ENCODE measurements at regions of chr10 and their contacts with region 1.

Region 1: DNA sequence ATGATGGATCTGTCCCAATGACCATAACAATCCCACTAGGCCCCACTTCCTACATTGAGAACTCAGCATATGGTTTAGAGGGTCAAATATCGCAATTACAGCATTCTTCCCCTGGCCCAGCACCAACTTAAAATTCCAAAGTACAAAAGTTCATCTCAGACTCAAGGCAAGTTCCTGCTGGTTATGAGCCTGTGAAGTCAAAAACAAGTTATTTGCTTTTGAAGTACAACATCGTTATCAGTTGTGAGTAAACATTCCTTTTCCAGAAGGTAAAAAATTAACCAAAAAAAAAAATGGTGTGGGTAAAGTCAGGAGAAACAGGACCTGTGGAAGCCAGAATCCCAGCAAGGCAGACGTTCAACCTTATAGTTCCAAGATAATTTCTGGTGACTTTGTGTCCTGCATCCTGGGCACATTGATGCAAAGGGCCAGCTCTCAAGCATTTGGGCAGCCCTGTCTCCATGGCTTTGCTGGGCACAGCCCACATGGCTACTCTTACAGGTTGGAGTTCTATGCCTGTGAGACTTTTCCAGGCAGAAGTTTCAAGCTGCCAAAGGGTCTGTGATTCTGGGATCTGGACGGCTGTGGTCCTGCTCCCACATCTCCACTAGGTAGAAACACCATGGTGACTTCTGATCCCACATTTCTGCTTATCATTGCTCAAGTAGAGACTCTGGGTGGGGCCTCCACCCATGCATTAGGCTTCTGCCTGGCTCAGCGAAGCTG is 37.5 kb downstream of the AKR1C8 start:
- DNase-seq: peak; percentile 47
- H3K4me3 Mint-ChIP-seq: peak overlapping the region; percentile 44
- H3K27ac Mint-ChIP-seq: peak overlapping the region; percentile 85
- H3K4me1 Mint-ChIP-seq: peaks cover 39% of the 10 kb centered on the region
- H3K27me3 Mint-ChIP-seq: no peaks in the 10 kb centered on the region
- CTCF ChIP-seq: no peak

Region 2: DNA sequence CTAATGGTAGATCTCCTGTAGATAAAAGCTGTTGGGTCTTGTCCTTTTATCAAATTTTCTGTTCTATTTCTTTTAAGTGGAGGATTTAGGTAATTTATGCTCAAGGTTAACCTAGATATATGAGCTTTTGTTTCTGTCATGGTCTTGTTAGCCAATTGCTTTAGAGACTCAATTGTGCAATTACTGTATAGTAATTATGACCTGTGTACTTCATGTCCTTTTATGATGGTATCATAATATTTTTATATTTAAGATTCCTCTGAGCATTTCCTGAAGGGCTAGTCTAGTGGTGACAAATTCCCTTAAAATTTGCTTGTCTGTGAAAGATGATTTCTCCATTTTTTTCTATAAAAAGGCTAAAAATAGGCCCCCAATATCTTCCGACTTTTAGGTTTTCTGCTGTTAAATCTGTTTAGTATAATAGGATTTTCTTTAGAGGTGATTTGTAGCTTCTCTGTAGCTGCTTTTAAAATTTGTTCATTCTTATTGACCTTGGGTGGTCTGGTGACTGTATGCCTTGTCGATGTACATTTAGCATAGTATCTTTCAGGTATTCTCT is 58.6 kb before region 1 on chr10:
- CTCF ChIA-PET with region 1: no interaction called
- intact Hi-C with region 1: no loop called
- DNase-seq: no peak
- H3K4me3 Mint-ChIP-seq: no peak overlapping the region
- H3K27ac Mint-ChIP-seq: no peak overlapping the region
- H3K4me1 Mint-ChIP-seq: peaks cover 37% of the 10 kb centered on the region
- H3K27me3 Mint-ChIP-seq: no peaks in the 10 kb centered on the region
- CTCF ChIP-seq: no peak

Region 3: GRCh38 chr10:5199398-5199797 is 52.0 kb after region 1 on chr10:
- CTCF ChIA-PET with region 1: no interaction called
- intact Hi-C with region 1: loop called (anchors 10 kb)
- DNase-seq: no peak
- H3K4me3 Mint-ChIP-seq: no peak overlapping the region
- H3K27ac Mint-ChIP-seq: no peak overlapping the region
- H3K4me1 Mint-ChIP-seq: peaks cover 18% of the 10 kb centered on the region
- H3K27me3 Mint-ChIP-seq: no peaks in the 10 kb centered on the region
- CTCF ChIP-seq: no peak

Region 4: DNA sequence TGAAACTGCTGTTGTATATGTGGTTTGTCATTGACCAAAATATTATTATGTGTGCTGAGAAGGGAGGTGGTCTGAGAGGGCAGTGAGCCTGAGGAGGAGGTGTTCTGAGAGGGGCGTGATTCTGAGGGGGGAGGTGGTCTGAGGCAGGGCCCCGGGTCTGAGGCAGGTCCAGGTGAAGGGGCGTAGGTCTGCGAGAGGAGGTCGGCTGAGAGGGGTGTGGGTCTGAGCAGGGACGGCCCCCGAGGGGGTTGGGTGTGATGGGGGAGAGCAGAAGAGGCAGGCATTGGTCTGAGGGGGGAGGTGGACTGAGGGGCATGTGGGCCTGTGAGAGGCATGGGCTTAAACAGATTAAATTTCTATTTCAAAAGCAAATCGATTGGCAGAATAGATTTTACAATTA is 81.6 kb after region 1 on chr10:
- CTCF ChIA-PET with region 1: no interaction called
- intact Hi-C with region 1: loop called (anchors 5 kb)
- DNase-seq: no peak
- H3K4me3 Mint-ChIP-seq: no peak overlapping the region
- H3K27ac Mint-ChIP-seq: no peak overlapping the region
- H3K4me1 Mint-ChIP-seq: peaks cover 3% of the 10 kb centered on the region
- H3K27me3 Mint-ChIP-seq: no peaks in the 10 kb centered on the region
- CTCF ChIP-seq: no peak